Activated B cell treated with CpG ODN at 0.5 μM for 24 hours (primary cell): ENCODE measurements at regions of chr1 and their contacts with region 1.

Region 1: DNA sequence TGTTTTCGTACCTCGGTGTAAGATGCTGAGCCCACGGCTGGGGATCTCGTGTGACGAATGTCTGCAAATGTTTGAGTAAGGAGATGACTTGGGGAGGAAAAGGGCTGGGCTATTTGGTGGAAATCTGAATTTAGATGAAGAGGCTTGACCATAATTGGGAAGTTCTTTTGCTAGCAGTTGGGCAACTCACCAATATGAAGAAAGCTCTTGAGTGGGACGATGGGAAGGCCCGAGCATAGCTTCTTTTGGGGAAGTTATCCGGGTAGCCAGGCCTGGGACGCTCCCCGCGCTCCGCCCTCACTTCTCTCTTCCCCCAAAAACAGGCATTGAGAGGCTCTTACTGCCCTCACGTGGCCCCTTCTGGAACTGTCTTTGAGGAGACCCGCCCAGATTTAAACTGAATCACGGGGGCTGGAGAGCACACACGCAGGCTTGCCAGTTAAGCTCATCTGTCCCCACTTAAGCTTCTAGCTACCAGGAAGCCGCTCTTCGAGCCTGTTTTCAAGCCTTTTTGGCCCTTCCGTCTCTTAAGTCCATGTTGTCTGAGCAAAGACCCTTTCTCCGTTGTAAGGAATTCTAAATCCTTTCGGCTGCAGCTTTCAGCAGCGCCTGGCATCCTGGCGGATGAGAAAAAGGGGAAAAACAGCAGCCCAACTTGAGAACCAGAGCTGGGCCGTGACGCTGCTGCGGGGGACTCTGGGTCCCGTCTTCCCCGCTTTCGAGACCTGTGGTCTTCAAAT is 93.1 kb downstream of the NID1 start:
- DNase-seq: peak; percentile 80
- ATAC-seq: peak; percentile 98
- H3K4me3 Mint-ChIP-seq: peak overlapping the region; percentile 78
- H3K27ac Mint-ChIP-seq: peak overlapping the region; percentile 96
- H3K4me1 Mint-ChIP-seq: peaks cover 19% of the 10 kb centered on the region
- H3K27me3 Mint-ChIP-seq: no peaks in the 10 kb centered on the region
- CTCF ChIP-seq: no peak

Region 2: GRCh38 chr1:235745503-235746136 is 226.1 kb before region 1 on chr1:
- CTCF ChIA-PET with region 1: interaction called, 13 read pairs
- POLR2A ChIA-PET with region 1: no interaction called
- intact Hi-C with region 1: loop called (anchors 5 kb)
- DNase-seq: no peak
- ATAC-seq: no peak
- H3K4me3 Mint-ChIP-seq: no peak overlapping the region
- H3K27ac Mint-ChIP-seq: no peak overlapping the region
- H3K4me1 Mint-ChIP-seq: no peaks in the 10 kb centered on the region
- H3K27me3 Mint-ChIP-seq: no peaks in the 10 kb centered on the region
- CTCF ChIP-seq: no peak

Region 3: GRCh38 chr1:235783148-235783776 is 188.5 kb before region 1 on chr1:
- CTCF ChIA-PET with region 1: interaction called, 50 read pairs
- POLR2A ChIA-PET with region 1: interaction called, 4 read pairs
- intact Hi-C with region 1: loop called (anchors 1 kb)
- DNase-seq: no peak
- ATAC-seq: no peak
- H3K4me3 Mint-ChIP-seq: no peak overlapping the region
- H3K27ac Mint-ChIP-seq: no peak overlapping the region
- H3K4me1 Mint-ChIP-seq: no peaks in the 10 kb centered on the region
- H3K27me3 Mint-ChIP-seq: no peaks in the 10 kb centered on the region
- CTCF ChIP-seq: no peak

Region 4: DNA sequence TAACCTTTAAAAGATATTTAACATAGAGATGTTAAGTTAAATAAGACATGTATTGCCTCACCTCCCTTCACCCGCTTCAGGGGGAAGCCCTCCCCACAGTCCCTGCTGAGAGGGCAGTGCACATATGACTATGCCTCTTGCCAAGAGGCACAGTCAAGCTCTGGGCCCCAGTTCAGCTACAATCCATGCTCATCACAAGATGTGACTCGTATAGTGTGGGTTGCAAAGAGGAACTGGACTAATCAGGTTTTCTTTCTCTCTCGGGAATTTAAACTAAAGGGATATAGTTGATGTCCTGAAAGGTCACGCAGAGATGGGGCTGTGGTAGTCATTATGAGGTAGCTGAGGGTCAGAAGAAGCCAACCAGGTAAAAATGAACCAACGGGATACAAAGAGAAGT is 140.6 kb before region 1 on chr1:
- CTCF ChIA-PET with region 1: interaction called, 28 read pairs
- POLR2A ChIA-PET with region 1: interaction called, 7 read pairs
- intact Hi-C with region 1: loop called (anchors 1 kb)
- DNase-seq: no peak
- ATAC-seq: peak; percentile 100
- H3K4me3 Mint-ChIP-seq: peak overlapping the region; percentile 13
- H3K27ac Mint-ChIP-seq: peak overlapping the region; percentile 84
- H3K4me1 Mint-ChIP-seq: peaks cover 20% of the 10 kb centered on the region
- H3K27me3 Mint-ChIP-seq: no peaks in the 10 kb centered on the region
- CTCF ChIP-seq: no peak

Region 5: DNA sequence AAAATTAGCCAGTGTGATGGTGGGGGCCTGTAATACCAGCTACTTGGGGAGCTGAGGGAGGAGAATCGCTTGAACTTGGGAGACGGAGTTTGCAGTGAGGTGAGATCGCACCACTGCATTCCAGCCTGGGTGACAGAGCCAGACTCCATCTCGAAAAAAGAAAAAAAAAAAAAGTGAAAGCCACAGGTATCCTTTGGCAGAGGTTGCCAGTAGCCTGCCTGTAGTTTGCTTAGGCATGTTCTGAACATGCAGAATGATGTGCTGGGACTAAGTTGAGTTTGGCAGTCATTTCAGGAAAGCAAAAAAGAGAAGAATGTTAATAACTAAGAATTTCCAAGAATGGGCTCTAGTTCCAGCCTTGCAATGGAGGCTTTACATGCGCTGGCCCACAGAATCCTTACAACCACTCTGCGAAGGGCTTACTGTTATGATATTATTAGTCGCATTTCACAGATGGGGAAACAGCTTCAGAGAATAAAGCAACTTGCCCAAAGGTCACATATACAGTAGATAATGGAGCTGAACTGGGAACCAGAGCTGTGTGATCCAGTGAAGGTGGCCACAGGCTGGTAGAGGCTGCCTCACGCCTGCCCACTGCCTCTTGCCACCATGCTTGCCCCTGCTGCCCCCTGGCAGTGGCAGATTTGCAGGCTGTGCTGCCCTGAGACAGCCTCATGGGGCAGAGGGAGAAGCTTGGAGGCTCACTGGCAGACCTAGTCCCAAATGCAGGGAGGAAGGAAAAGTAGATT is 38.5 kb before region 1 on chr1:
- CTCF ChIA-PET with region 1: interaction called, 19 read pairs
- POLR2A ChIA-PET with region 1: interaction called, 6 read pairs
- intact Hi-C with region 1: loop called (anchors 1 kb)
- DNase-seq: no peak
- ATAC-seq: no peak
- H3K4me3 Mint-ChIP-seq: peak overlapping the region; percentile 62
- H3K27ac Mint-ChIP-seq: peak overlapping the region; percentile 72
- H3K4me1 Mint-ChIP-seq: peaks cover 91% of the 10 kb centered on the region
- H3K27me3 Mint-ChIP-seq: no peaks in the 10 kb centered on the region
- CTCF ChIP-seq: no peak

Region 6: GRCh38 chr1:235954306-235955283 is 17.1 kb before region 1 on chr1:
- CTCF ChIA-PET with region 1: interaction called, 29 read pairs
- POLR2A ChIA-PET with region 1: interaction called, 21 read pairs
- intact Hi-C with region 1: loop called (anchors 1 kb)
- DNase-seq: peak; percentile 70
- ATAC-seq: peak; percentile 95
- H3K4me3 Mint-ChIP-seq: peak overlapping the region; percentile 58
- H3K27ac Mint-ChIP-seq: peak overlapping the region; percentile 81
- H3K4me1 Mint-ChIP-seq: peaks cover 69% of the 10 kb centered on the region
- H3K27me3 Mint-ChIP-seq: no peaks in the 10 kb centered on the region
- CTCF ChIP-seq: no peak

Region 7: DNA sequence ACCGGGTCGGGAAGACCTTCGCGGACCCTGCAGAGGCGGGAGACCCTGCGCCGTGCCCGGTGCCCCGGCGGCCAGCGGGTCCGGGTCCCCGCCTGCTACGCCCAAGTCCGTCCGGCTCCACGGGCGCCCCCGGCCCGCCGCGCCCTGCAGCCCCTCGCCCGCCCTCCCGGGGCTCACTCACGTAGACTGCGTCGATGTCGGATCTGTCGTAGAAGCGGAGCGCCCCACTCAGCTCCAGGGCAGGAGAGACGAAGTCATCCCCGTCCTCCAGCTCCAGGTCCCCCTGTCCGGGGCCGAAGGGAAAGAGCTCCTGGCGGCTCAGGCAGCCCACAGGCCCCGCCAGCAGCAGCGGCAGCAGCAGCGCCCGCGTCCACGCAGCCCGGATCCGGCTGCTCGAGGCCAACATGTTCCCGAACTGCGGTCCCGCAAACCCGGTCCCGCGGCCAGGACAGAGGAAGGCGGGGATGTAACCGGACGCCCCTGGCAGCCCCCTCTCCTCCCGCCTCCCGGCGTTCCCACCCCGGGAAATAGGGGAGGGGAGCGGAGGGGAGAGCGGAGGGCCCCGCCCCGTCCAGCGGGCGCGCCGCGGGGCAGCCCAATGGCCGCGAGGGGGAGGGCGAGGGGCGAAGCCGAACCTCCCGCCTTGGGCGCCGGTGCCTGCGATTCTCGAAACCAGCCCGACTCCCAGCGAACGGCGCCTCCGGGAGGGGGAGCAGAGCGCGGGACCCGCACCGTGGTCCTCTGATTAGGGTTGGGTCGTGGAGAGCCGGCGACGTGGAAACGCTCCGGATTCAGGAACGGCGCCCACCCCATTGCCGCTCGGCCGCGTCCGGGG is 93.2 kb after region 1 on chr1 and contains the start of gene NID1:
- CTCF ChIA-PET with region 1: interaction called, 4 read pairs
- POLR2A ChIA-PET with region 1: interaction called, 6 read pairs
- intact Hi-C with region 1: loop called (anchors 2 kb)
- DNase-seq: peak; percentile 38
- ATAC-seq: peak; percentile 18
- H3K4me3 Mint-ChIP-seq: peak within 1 kb of the TSS; percentile 70
- H3K27ac Mint-ChIP-seq: no peak within 1 kb of the TSS
- H3K4me1 Mint-ChIP-seq: peaks cover 33% of the 10 kb centered on the region
- H3K27me3 Mint-ChIP-seq: peaks cover 25% of the 10 kb centered on the region
- CTCF ChIP-seq: no peak
- total RNA-seq, gene NID1: 0.04 and 0.10 TPM in 2 replicates